ENCODE measurements at regions of chr9 and their contacts with region 1.

Region 1: DNA sequence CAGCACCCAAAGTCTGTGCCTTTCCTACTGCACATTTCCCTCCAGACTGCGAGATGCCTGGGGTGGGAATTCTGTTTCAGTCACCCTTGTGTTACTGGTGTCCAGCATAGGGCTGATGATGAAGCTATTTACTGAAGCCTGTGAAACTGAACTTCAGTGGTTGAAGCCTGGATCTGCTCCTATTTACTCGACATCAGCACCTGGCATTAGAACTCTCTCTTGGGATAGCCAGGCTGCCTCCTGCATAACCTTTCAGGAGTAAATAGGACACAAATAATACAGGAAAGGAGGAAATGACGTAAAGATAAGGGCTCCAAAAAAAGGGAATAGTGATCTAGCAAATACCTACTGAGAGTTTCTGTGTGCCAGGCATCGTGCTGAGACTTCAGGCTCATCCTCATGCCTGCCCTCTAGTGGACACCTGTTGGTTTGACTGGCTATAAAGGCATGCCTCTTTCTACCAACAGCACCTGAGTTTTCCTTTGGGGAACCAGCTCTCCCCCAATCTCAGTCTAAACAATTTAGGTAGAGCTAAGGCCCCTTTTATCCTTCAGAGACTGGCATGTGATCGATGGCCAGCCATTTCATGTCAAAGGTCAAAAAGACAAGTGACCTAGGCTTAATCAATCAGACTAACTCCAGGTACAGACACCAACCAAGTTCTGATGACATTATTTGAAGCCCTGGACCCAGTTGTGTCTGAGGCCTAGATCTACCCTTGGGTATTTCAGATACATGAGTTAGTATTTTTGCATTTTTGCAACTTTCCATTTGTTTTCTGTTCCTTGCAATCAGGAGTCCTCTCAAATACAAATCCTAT is 192.1 kb upstream of the TRIM32 start:
- DNase-seq: no peak
- H3K4me3 ChIP-seq: no peak overlapping the region
- H3K27ac ChIP-seq: no peak overlapping the region
- H3K4me1 ChIP-seq: no peaks in the 10 kb centered on the region
- H3K27me3 ChIP-seq: no peaks in the 10 kb centered on the region
- CTCF ChIP-seq: peak; percentile 52 to 62

Region 2: DNA sequence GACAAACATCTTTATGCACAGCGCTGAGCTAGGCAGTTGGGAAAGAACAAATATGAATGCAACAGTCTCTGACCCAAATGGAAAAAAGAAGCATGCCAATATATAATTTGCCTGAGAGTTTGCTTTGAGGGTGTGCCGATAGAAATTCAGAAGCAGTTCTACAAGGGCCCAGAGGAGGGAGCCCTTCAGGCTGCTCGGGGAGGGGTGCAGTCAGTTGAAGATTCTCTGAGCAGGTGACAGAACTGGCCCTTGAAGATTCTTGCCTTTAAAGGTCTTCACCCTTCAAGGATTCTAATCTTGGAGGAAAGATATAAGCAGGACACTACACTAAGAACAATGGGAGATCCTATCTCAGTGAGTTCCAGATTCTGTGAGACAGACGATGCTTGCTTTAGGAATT is 345.2 kb before region 1 on chr9:
- intact Hi-C with region 1: loop called (anchors 10 kb)
- DNase-seq: no peak
- H3K4me3 ChIP-seq: no peak overlapping the region
- H3K27ac ChIP-seq: no peak overlapping the region
- H3K4me1 ChIP-seq: peaks cover 0 to 21% (median 14%) of the 10 kb centered on the region in 4 donors
- H3K27me3 ChIP-seq: no peaks in the 10 kb centered on the region
- CTCF ChIP-seq: peak; percentile 29 to 36

Measured in tibial artery (tissue), 4 donors.